ENCODE measurements at regions of chr5 and their contacts with region 1.

Region 1: DNA sequence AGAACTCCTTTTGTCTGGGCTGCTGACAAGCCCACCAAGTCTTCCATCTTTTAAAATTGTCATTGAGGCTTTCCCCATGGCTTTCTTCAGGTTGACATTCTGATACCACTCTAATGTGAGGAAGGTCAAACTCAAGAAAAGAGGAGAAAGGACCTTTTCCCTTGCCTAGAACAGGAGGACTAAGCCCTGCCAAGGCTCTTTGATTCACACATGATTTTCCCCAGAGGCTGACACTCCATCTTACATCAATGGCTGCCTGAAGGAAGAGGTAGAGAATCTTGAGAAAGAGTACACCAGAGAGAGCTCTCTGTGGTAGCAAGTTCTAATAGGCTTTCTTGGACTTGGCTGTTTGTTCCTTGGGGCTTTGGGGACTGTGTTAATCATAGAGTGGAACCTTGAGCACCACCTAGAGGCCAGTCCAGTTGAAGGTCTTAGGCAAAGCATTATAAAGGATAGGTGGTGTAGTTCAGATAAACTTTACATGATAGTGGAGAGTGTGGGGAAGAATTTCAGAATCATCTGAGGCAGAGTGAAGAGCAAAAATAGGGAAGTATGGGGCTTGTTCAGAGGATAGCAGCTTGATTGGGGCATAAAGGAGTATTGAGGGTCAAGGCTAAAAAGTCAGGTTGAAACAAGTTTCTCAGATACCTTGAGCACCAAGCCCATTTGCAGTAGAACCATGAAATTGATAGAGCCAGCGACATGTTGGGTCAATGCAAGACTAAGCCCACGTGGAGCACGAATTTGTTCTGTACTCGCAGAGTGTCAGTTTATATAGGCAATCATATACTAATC is 36.7 kb downstream of the NDFIP1 start:
- DNase-seq: peak; percentile 81

Region 2: GRCh38 chr5:141992349-141992963 is 152.8 kb before region 1 on chr5:
- in situ Hi-C with region 1: loop called (anchors 10 kb)
- DNase-seq: peak; percentile 86

Region 3: DNA sequence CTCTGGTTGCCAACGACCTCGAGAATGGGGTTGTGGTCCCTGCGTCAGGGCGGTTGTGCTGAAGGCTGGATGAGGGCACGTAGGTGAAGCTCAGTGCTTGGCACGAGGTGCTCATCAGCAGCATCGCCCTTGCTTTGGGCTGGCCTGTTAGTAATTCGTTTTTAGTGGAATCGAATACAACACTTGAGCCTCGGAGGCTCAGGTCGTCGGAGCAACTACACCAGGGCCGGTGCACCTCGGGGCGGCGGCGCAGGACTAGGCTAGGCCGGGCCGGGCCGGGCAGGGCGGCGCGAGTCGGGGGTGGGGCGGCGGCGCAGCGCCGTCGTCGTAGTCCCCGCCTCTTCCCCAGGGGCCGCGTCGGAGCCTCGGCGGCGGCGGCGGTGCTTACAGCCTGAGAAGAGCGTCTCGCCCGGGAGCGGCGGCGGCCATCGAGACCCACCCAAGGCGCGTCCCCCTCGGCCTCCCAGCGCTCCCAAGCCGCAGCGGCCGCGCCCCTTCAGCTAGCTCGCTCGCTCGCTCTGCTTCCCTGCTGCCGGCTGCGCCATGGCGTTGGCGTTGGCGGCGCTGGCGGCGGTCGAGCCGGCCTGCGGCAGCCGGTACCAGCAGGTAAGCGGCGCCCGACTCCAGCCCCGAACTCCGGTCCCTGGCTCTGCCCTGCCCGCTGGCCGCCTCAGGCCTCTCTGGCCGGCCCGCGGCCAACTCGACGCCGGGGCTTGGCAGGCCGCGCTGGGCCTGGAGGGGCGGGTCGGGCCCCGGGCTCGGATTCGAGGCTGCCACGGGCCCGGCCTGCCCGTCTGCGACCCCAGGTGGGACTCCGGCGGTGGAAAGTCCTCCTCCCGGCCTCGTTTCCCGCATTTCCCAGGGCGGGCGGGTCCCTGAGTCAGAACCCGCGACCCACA is 36.6 kb before region 1 on chr5 and contains the start of gene NDFIP1:
- in situ Hi-C with region 1: no loop called
- DNase-seq: peak; percentile 83
- total RNA-seq, gene NDFIP1: 86.2 and 87.1 TPM in 2 replicates

Region 4: DNA sequence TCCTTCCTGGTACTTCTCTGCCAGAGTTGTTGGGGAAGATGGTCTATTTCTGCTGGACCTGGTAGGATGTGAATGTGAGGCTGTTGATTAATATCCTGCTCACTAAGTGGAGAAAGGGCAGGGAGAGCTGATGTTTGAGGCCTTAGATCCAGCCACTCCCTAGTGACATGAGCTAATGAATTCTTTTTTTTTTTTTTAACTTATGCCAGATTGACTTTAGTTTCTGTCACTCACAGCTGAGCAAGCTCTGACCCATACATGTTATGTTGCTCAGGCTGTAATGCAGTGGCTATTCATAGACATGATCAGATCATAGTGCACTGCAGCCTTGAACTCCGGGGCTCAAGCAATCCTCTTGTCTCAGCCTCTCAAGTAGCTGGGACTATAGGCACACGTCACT is 254.6 kb after region 1 on chr5:
- in situ Hi-C with region 1: no loop called
- DNase-seq: no peak